ENCODE measurements at regions of chr3 and their contacts with region 1.

Region 1: GRCh38 chr3:128051837-128052594 is at the start of gene SEC61A1:
- DNase-seq: peak; percentile 93 to 97
- H3K4me3 ChIP-seq: peak within 1 kb of the TSS; percentile 98
- H3K4me3 Mint-ChIP-seq: peak within 1 kb of the TSS; percentile 97
- H3K27ac Mint-ChIP-seq: peak within 1 kb of the TSS; percentile 95
- H3K4me1 ChIP-seq: peaks cover 15% of the 10 kb centered on the region
- H3K4me1 Mint-ChIP-seq: peaks cover 28% of the 10 kb centered on the region
- H3K27me3 ChIP-seq: no peaks in the 10 kb centered on the region
- H3K27me3 Mint-ChIP-seq: peaks cover 1% of the 10 kb centered on the region
- CTCF ChIP-seq: no peak
- total RNA-seq, gene SEC61A1: 176 and 178 TPM in 2 replicates

Region 2: GRCh38 chr3:128011140-128011539 is 40.9 kb before region 1 on chr3:
- CTCF ChIA-PET with region 1: interaction called, 4 read pairs
- POLR2A ChIA-PET with region 1: no interaction called
- intact Hi-C with region 1: loop called (anchors 1 kb)
- DNase-seq: peak; percentile 86 to 87
- H3K4me3 ChIP-seq: no peak overlapping the region
- H3K4me3 Mint-ChIP-seq: peak overlapping the region; percentile 39
- H3K27ac Mint-ChIP-seq: peak overlapping the region; percentile 39
- H3K4me1 ChIP-seq: no peaks in the 10 kb centered on the region
- H3K4me1 Mint-ChIP-seq: peaks cover 16% of the 10 kb centered on the region
- H3K27me3 ChIP-seq: no peaks in the 10 kb centered on the region
- H3K27me3 Mint-ChIP-seq: no peaks in the 10 kb centered on the region
- CTCF ChIP-seq: peak; percentile 39 to 86

Region 3: GRCh38 chr3:128217702-128218547 is 165.9 kb after region 1 on chr3:
- CTCF ChIA-PET with region 1: no interaction called
- POLR2A ChIA-PET with region 1: no interaction called
- intact Hi-C with region 1: no loop called
- DNase-seq: peak in 1 of 2 experiments; percentile 5
- H3K4me3 ChIP-seq: no peak overlapping the region
- H3K4me3 Mint-ChIP-seq: no peak overlapping the region
- H3K27ac Mint-ChIP-seq: peak overlapping the region; percentile 78
- H3K4me1 ChIP-seq: no peaks in the 10 kb centered on the region
- H3K4me1 Mint-ChIP-seq: no peaks in the 10 kb centered on the region
- H3K27me3 ChIP-seq: no peaks in the 10 kb centered on the region
- H3K27me3 Mint-ChIP-seq: no peaks in the 10 kb centered on the region
- CTCF ChIP-seq: no peak

Region 4: DNA sequence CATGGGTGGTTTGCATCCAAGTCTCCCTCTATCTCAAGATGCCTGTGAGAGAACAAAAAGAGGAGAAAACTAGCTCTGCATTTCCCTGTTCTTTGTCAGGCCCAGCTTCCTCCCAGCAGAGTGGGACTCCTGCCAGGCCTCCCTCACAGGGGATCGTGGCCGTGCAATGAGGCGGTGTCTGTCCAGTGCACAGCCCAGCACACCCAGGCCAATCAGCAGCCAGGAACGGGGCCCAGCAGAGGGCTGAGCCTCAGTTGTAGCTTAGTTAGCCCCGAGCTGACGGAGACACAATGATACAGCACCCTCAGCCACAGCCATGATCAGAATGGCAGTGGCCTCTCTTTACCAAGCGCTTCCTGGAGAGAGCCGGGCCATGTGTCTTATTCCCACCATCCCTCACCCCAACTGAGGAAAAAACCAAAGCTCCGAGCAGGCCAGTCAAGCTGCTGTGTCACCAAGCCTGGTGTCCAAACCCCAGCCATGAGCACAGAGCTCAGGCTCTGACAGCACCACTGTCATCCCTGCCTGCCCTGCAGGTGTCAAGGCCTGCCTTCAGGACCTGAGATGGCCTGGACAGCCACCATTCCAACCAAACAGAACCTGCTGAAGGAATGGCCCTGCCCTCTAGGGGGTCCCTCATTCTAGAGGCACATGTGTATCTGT is 343.6 kb after region 1 on chr3:
- CTCF ChIA-PET with region 1: no interaction called
- POLR2A ChIA-PET with region 1: no interaction called
- intact Hi-C with region 1: no loop called
- DNase-seq: no peak
- H3K4me3 ChIP-seq: no peak overlapping the region
- H3K4me3 Mint-ChIP-seq: no peak overlapping the region
- H3K27ac Mint-ChIP-seq: no peak overlapping the region
- H3K4me1 ChIP-seq: no peaks in the 10 kb centered on the region
- H3K4me1 Mint-ChIP-seq: no peaks in the 10 kb centered on the region
- H3K27me3 ChIP-seq: no peaks in the 10 kb centered on the region
- H3K27me3 Mint-ChIP-seq: no peaks in the 10 kb centered on the region
- CTCF ChIP-seq: no peak